Ascending aorta (tissue), 2 donors: ENCODE measurements at regions of chr16 and their contacts with region 1.

Region 1: GRCh38 chr16:50806099-50807062 is 64.5 kb downstream of the CYLD start:
- DNase-seq: peak; percentile 49 to 94
- H3K4me3 ChIP-seq: peak overlapping the region; percentile 34 to 52
- H3K27ac ChIP-seq: peak overlapping the region; percentile 5 to 61
- H3K4me1 ChIP-seq: peaks cover 0 to 4% of the 10 kb centered on the region in 2 donors
- H3K27me3 ChIP-seq: no peaks in the 10 kb centered on the region
- CTCF ChIP-seq: peak; percentile 80 to 94 (median 86)

Region 2: GRCh38 chr16:50603206-50604064 is 202.9 kb before region 1 on chr16:
- intact Hi-C with region 1: no loop called
- DNase-seq: peak; percentile 54 to 84
- H3K4me3 ChIP-seq: peak overlapping the region in 1 of 2 donors; percentile 36
- H3K27ac ChIP-seq: peak overlapping the region; percentile 85 to 93
- H3K4me1 ChIP-seq: peaks cover 40 to 65% of the 10 kb centered on the region in 2 donors
- H3K27me3 ChIP-seq: no peaks in the 10 kb centered on the region
- CTCF ChIP-seq: no peak

Region 3: GRCh38 chr16:50696575-50697420 is 109.6 kb before region 1 on chr16:
- intact Hi-C with region 1: loop called (anchors 5 kb)
- DNase-seq: peak; percentile 80 to 85
- H3K4me3 ChIP-seq: peak overlapping the region in 1 of 2 donors; percentile 62
- H3K27ac ChIP-seq: peak overlapping the region; percentile 16 to 50
- H3K4me1 ChIP-seq: peaks cover 3 to 20% of the 10 kb centered on the region in 2 donors
- H3K27me3 ChIP-seq: no peaks in the 10 kb centered on the region
- CTCF ChIP-seq: no peak

Region 4: GRCh38 chr16:50747207-50747956 is 59.0 kb before region 1 on chr16:
- intact Hi-C with region 1: loop called (anchors 5 kb)
- DNase-seq: no peak
- H3K4me3 ChIP-seq: no peak overlapping the region
- H3K27ac ChIP-seq: no peak overlapping the region
- H3K4me1 ChIP-seq: peaks cover 0 to 12% of the 10 kb centered on the region in 2 donors
- H3K27me3 ChIP-seq: no peaks in the 10 kb centered on the region
- CTCF ChIP-seq: peak in 1 of 3 experiments; percentile 37